ENCODE measurements at regions of chr12 and their contacts with region 1.

Region 1: DNA sequence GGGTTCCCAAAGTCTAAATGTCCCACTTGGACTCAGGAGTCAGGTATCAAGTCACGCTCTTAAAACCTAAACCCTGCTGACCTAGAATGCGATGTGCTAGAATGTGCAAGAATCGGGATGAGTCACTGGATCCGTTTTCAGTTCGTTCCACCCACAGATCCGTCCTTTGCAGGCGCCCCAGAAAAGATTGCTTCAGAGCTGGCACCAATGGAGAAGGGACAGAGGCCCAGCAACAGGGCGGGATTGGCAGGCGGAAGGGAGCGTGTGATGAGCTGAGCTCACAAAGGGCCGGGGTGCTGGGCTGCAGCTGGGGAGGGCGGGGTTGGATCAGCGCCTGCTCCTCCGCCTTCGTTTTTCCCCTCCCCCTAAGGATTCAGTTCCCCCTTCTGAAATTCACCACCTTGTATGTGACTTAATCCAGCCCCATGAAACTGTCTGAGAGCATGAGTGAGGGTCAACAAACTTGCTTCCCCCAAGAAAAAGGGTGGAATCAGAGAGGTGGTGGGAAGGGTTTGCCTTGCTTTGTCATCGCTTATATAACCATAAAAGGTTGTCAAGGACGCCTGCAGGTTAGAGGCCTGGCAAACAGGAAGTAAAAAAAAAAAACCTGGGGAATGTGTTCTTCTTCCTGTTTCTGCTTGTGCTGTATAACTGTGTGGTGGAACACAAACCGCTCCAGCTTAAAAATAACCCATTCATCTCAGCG is 2.8 kb upstream of the UBC start:
- DNase-seq: peak; percentile 97
- ATAC-seq: peak; percentile 69
- H3K4me3 Mint-ChIP-seq: peak overlapping the region; percentile 100
- H3K27ac Mint-ChIP-seq: peak overlapping the region; percentile 100
- H3K4me1 Mint-ChIP-seq: peaks cover 86% of the 10 kb centered on the region
- H3K27me3 Mint-ChIP-seq: no peaks in the 10 kb centered on the region

Region 2: GRCh38 chr12:123436017-123436964 is 1481.0 kb before region 1 on chr12 and contains the start of gene RILPL2:
- CTCF ChIA-PET with region 1: no interaction called
- POLR2A ChIA-PET with region 1: no interaction called
- intact Hi-C with region 1: loop called in 1 of 2 experiments (anchors 10 kb)
- DNase-seq: peak; percentile 96
- ATAC-seq: peak; percentile 85
- H3K4me3 Mint-ChIP-seq: peak within 1 kb of the TSS; percentile 95
- H3K27ac Mint-ChIP-seq: peak within 1 kb of the TSS; percentile 98
- H3K4me1 Mint-ChIP-seq: peaks cover 33% of the 10 kb centered on the region
- H3K27me3 Mint-ChIP-seq: no peaks in the 10 kb centered on the region
- total RNA-seq, gene RILPL2: 10.4 to 12.1 TPM

Region 3: DNA sequence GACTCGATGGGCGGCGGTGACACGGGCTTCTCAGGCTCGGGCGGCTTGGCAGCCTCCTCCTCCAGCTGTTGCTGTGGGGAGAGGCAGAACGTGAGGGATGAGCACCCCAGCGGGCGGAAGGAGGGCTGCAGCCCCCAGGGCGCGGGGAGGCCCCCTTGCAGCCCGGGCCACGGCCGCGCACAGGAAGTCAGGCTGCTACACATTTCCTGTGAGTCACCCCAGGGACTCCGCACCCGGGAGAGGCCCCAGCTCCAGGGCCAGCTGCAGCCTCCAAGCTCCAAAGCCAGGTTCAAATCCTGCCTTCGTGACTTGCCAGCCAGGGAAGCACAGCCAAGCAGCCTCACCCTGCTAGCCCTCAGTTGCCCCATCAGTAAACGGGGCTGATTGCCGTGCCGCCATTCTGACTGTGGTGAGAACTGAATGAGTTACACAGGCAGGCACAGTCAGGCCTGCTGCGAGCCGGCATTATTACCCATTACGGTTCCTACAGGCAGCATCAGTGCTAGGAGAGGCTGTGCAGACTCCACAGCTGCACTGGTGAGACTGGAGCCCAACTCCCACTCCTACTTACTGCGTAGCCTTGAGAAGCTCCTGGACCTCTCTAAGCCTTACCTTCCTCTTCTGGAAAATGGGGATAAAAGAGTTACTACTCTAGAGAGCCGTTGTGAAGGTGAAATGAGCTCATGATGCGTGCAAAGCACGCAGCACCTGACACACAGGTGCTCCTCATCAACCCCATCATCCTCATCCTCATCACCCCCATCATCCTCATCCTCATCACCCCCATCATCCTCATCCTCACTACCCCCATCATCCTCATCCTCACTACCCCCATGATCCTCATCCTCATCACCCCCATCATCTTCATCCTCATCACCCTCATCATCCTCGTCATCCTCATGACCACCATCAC is 450.8 kb before region 1 on chr12:
- CTCF ChIA-PET with region 1: no interaction called
- POLR2A ChIA-PET with region 1: no interaction called
- intact Hi-C with region 1: loop called in 1 of 2 experiments (anchors 5 kb)
- DNase-seq: peak; percentile 94
- ATAC-seq: peak; percentile 99
- H3K4me3 Mint-ChIP-seq: peak overlapping the region; percentile 61
- H3K27ac Mint-ChIP-seq: peak overlapping the region; percentile 74
- H3K4me1 Mint-ChIP-seq: peaks cover 34% of the 10 kb centered on the region
- H3K27me3 Mint-ChIP-seq: no peaks in the 10 kb centered on the region

Region 4: DNA sequence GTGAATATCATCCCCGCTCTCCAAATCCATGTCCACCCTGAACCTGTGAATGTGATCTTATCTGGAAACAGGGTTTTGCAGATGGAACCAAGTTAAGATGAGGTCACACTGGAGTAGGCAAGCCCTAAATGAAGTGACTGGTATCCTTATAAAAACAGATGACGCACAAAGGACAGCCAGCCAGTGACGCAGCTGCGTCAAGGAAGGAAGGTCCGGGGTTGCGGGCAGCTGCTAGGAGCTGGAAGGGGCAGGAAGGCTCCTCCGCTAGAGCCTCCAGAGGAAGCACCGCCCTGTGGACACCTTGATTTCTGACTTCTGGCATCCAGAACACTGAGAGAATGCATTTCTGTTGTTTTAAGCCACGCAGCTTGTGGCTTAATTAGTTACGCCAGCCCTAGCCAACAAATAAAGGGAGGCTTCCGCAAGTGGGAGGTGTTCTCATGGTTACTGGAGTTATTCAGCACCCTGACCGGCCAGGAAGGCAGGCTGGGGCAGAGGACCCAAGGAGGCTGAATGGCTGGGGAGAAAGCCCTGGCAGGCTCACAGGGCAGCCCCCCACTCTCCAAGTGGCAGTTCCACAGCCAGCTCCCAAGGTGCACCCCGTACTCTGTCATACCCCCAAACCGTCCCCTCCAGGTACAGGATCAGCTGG is 222.3 kb before region 1 on chr12:
- CTCF ChIA-PET with region 1: no interaction called
- POLR2A ChIA-PET with region 1: no interaction called
- intact Hi-C with region 1: no loop called
- DNase-seq: no peak
- ATAC-seq: no peak
- H3K4me3 Mint-ChIP-seq: no peak overlapping the region
- H3K27ac Mint-ChIP-seq: no peak overlapping the region
- H3K4me1 Mint-ChIP-seq: peaks cover 6% of the 10 kb centered on the region
- H3K27me3 Mint-ChIP-seq: no peaks in the 10 kb centered on the region

Region 5: GRCh38 chr12:124713436-124714082 is 203.7 kb before region 1 on chr12:
- CTCF ChIA-PET with region 1: no interaction called
- POLR2A ChIA-PET with region 1: no interaction called
- intact Hi-C with region 1: loop called in 1 of 2 experiments (anchors 1 kb)
- DNase-seq: peak; percentile 74
- ATAC-seq: peak; percentile 96
- H3K4me3 Mint-ChIP-seq: peak overlapping the region; percentile 58
- H3K27ac Mint-ChIP-seq: peak overlapping the region; percentile 81
- H3K4me1 Mint-ChIP-seq: peaks cover 22% of the 10 kb centered on the region
- H3K27me3 Mint-ChIP-seq: peaks cover 2% of the 10 kb centered on the region

Region 6: GRCh38 chr12:124906606-124907261 is 10.6 kb before region 1 on chr12:
- CTCF ChIA-PET with region 1: interaction called, 70 read pairs
- POLR2A ChIA-PET with region 1: interaction called, 22 read pairs
- intact Hi-C with region 1: no loop called
- DNase-seq: peak; percentile 93
- ATAC-seq: peak; percentile 88
- H3K4me3 Mint-ChIP-seq: no peak overlapping the region
- H3K27ac Mint-ChIP-seq: peak overlapping the region; percentile 28
- H3K4me1 Mint-ChIP-seq: peaks cover 25% of the 10 kb centered on the region
- H3K27me3 Mint-ChIP-seq: no peaks in the 10 kb centered on the region

Region 7: GRCh38 chr12:124940549-124941527 is 23.6 kb after region 1 on chr12:
- CTCF ChIA-PET with region 1: interaction called, 92 read pairs
- POLR2A ChIA-PET with region 1: interaction called, 39 read pairs
- intact Hi-C with region 1: loop called (anchors 1 kb)
- DNase-seq: peak; percentile 95
- ATAC-seq: peak; percentile 39
- H3K4me3 Mint-ChIP-seq: no peak overlapping the region
- H3K27ac Mint-ChIP-seq: no peak overlapping the region
- H3K4me1 Mint-ChIP-seq: peaks cover 11% of the 10 kb centered on the region
- H3K27me3 Mint-ChIP-seq: no peaks in the 10 kb centered on the region